CD4-positive, alpha-beta T cell (primary cell): ENCODE measurements at regions of chr12 and their contacts with region 1.

Region 1: GRCh38 chr12:120356567-120357030 is 12.4 kb downstream of the MSI1 start:
- DNase-seq: peak; percentile 56 to 81 (median 65)
- ATAC-seq: peak; percentile 88
- H3K4me3 ChIP-seq: no peak overlapping the region
- H3K4me3 Mint-ChIP-seq: no peak overlapping the region
- H3K27ac ChIP-seq: no peak overlapping the region
- H3K27ac Mint-ChIP-seq: no peak overlapping the region
- H3K4me1 ChIP-seq: peaks cover 5% of the 10 kb centered on the region
- H3K4me1 Mint-ChIP-seq: no peaks in the 10 kb centered on the region
- H3K27me3 ChIP-seq: peaks cover 18 to 28% of the 10 kb centered on the region in 2 experiments
- H3K27me3 Mint-ChIP-seq: peaks cover 54% of the 10 kb centered on the region
- CTCF ChIP-seq: peak; percentile 91

Region 2: DNA sequence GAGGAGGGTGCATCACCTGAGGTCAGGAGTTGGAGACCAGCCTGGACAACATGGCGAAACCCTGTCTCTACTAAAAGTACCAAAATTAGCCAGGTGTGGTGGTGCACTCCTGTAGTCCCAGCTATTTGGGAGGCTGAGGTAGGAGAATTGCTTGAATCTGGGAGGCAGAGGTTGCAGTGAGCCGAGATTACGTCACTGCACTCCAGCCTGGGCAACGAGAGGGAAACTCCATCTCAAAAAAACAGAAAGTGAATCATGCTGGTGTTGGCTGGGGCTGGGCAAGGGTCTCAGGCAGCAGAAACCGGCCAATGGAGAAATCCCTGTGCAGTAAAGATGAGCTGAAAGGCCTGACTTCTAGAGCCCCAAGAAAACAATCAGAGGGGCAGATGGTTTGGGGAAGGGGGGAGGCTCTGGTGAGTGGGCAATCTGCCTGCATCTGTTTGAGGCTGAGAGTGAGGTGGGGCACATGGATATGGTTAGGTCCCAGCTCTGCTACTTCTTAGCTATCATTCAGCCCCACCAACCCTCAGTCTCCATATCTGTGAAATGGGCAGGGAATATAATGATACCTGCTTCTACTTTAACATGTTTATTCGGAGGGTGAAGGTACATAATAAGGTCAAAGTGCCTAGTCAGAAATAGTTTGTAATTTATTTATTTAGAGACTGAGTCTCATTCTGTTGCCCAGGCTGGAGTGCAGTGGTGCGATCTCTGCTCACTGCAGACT is 60.1 kb after region 1 on chr12:
- CTCF ChIA-PET with region 1: no interaction called
- POLR2A ChIA-PET with region 1: no interaction called
- intact Hi-C with region 1: loop called in 1 of 2 experiments (anchors 5 kb)
- DNase-seq: no peak
- ATAC-seq: no peak
- H3K4me3 ChIP-seq: no peak overlapping the region
- H3K4me3 Mint-ChIP-seq: no peak overlapping the region
- H3K27ac ChIP-seq: no peak overlapping the region
- H3K27ac Mint-ChIP-seq: no peak overlapping the region
- H3K4me1 ChIP-seq: no peaks in the 10 kb centered on the region
- H3K4me1 Mint-ChIP-seq: no peaks in the 10 kb centered on the region
- H3K27me3 ChIP-seq: no peaks in the 10 kb centered on the region
- H3K27me3 Mint-ChIP-seq: peaks cover 3% of the 10 kb centered on the region
- CTCF ChIP-seq: no peak

Region 3: GRCh38 chr12:120489018-120489417 is 132.4 kb after region 1 on chr12:
- CTCF ChIA-PET with region 1: no interaction called
- POLR2A ChIA-PET with region 1: no interaction called
- intact Hi-C with region 1: no loop called
- DNase-seq: no peak
- ATAC-seq: no peak
- H3K4me3 ChIP-seq: no peak overlapping the region
- H3K4me3 Mint-ChIP-seq: no peak overlapping the region
- H3K27ac ChIP-seq: no peak overlapping the region
- H3K27ac Mint-ChIP-seq: no peak overlapping the region
- H3K4me1 ChIP-seq: no peaks in the 10 kb centered on the region
- H3K4me1 Mint-ChIP-seq: no peaks in the 10 kb centered on the region
- H3K27me3 ChIP-seq: no peaks in the 10 kb centered on the region
- H3K27me3 Mint-ChIP-seq: no peaks in the 10 kb centered on the region
- CTCF ChIP-seq: no peak

Region 4: GRCh38 chr12:120710031-120710804 is 353.6 kb after region 1 on chr12 and contains the start of gene UNC119B:
- CTCF ChIA-PET with region 1: no interaction called
- POLR2A ChIA-PET with region 1: no interaction called
- intact Hi-C with region 1: loop called in 1 of 2 experiments (anchors 10 kb)
- DNase-seq: peak; percentile 57 to 87 (median 70)
- ATAC-seq: peak; percentile 86
- H3K4me3 ChIP-seq: peak within 1 kb of the TSS; percentile 83
- H3K4me3 Mint-ChIP-seq: peak within 1 kb of the TSS; percentile 96
- H3K27ac ChIP-seq: peak within 1 kb of the TSS; percentile 13 to 58
- H3K27ac Mint-ChIP-seq: peak within 1 kb of the TSS; percentile 86
- H3K4me1 ChIP-seq: peaks cover 30% of the 10 kb centered on the region
- H3K4me1 Mint-ChIP-seq: peaks cover 42% of the 10 kb centered on the region
- H3K27me3 ChIP-seq: no peaks in the 10 kb centered on the region
- H3K27me3 Mint-ChIP-seq: no peaks in the 10 kb centered on the region
- CTCF ChIP-seq: no peak
- total RNA-seq, gene UNC119B: 10.7 TPM